Gastrocnemius medialis (tissue), 4 donors: ENCODE measurements at regions of chr19 and their contacts with region 1.

Region 1: DNA sequence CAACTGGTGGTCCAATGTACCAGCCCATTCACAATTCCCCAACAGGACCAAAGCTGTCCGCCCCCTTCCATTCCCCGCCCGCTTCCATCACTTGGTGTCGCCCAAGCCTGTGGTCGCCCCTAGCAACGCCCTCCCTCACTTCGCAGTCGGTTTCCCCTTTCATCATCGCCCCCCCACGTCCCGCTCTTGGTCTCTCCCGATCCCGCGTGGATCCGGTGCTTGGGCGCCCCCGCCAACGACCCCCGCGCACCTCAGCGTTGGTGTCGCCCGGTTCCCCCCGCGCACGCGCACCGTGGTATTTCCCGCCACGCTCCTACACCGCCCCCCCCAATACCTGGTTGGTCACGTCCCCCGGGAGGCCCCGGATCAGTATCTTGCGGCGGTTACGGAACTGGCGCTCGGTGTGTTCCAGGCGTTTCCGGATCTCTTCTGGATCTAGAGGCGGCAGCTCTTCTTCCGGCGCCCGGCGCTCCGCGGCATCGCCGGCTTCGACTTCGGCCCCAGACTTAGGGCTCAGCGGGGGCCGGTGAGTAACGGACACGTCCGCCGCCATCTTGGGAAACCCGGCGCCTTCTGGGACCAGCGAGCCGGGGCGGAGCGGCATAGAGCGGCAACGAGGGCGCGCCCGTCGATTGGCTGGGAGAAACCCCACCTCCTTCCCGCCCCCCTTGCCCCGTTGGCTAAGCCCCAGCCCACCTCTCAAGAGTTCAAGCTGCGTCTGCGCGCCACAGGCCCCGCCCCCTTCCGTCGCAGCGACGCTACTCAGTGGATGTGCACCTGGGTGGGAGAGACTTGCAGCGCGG is at the start of gene RAVER1:
- DNase-seq: peak; percentile 97
- ATAC-seq: peak; percentile 90 to 91
- H3K4me3 ChIP-seq: peak within 1 kb of the TSS; percentile 69 to 96 (median 88)
- H3K27ac ChIP-seq: peak within 1 kb of the TSS; percentile 90 to 98 (median 95)
- H3K4me1 ChIP-seq: peaks cover 18 to 23% of the 10 kb centered on the region in 2 donors
- H3K27me3 ChIP-seq: no peaks in the 10 kb centered on the region
- CTCF ChIP-seq: no peak
- POLR2A ChIP-seq: peak; percentile 85 to 94
- total RNA-seq, gene RAVER1: 10.0 to 15.9 (median 11.8) TPM

Region 2: GRCh38 chr19:9834726-9835506 is 498.2 kb before region 1 on chr19 and contains the start of gene PIN1:
- in situ Hi-C with region 1: no loop called
- intact Hi-C with region 1: loop called (anchors 10 kb)
- DNase-seq: peak; percentile 98 to 99
- ATAC-seq: peak; percentile 98 to 99
- H3K4me3 ChIP-seq: peak within 1 kb of the TSS; percentile 74 to 99 (median 94)
- H3K27ac ChIP-seq: peak within 1 kb of the TSS; percentile 78 to 90 (median 87)
- H3K4me1 ChIP-seq: peaks cover 12 to 18% of the 10 kb centered on the region in 2 donors
- H3K27me3 ChIP-seq: no peaks in the 10 kb centered on the region
- CTCF ChIP-seq: peak; percentile 36 to 74 (median 43)
- POLR2A ChIP-seq: peak; percentile 24 to 52
- total RNA-seq, gene PIN1: 83.9 to 111 (median 93.4) TPM

Region 3: DNA sequence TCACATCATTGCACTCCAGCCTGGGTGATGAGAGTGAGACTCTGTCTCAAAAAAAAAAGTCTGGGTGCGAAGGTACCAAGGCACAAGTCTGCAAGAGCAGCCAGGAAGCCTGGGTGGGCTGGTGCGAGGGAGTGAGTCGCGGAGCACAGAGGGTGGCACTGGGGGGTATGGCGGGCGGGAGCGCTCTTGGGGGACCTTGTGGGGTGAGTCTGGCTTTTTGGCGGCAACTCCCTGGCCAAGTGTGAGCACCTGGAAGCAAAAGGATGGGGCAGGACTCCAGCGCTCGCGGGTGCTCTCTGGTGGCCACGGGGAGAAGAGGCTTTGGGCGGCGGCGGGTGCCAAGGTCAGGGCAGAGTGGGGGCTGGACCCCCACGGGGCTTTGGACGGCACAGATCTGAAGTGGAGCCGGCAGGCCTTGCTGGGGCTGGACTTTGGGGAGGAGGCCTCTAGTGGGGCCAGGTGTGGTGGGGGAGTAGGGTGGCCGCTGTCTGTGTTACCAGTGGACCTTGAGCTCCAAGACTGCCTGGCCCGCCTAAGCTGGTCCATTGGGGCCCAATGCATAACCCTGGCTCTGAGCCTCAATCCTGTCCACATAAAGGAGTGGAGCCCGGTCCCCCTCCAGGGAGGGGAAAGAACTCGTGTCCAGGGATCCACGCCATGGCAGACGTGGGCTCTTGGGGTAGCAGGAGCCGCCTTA is 220.1 kb before region 1 on chr19:
- in situ Hi-C with region 1: no loop called
- intact Hi-C with region 1: loop called (anchors 10 kb)
- DNase-seq: no peak
- ATAC-seq: no peak
- H3K4me3 ChIP-seq: no peak overlapping the region
- H3K27ac ChIP-seq: peak overlapping the region in 1 of 4 donors; percentile 27
- H3K4me1 ChIP-seq: peaks cover 4 to 17% of the 10 kb centered on the region in 2 donors
- H3K27me3 ChIP-seq: no peaks in the 10 kb centered on the region
- CTCF ChIP-seq: peak in 4 of 5 experiments; percentile 27 to 54 (median 38)
- POLR2A ChIP-seq: no peak

Region 4: GRCh38 chr19:10251792-10252694 is 81.1 kb before region 1 on chr19 and contains the start of gene MRPL4:
- in situ Hi-C with region 1: no loop called
- intact Hi-C with region 1: loop called (anchors 1 kb)
- DNase-seq: peak; percentile 95 to 97
- ATAC-seq: peak; percentile 99 to 100
- H3K4me3 ChIP-seq: peak within 1 kb of the TSS; percentile 77 to 97 (median 89)
- H3K27ac ChIP-seq: peak within 1 kb of the TSS; percentile 82 to 87 (median 86)
- H3K4me1 ChIP-seq: peaks cover 7 to 15% of the 10 kb centered on the region in 2 donors
- H3K27me3 ChIP-seq: no peaks in the 10 kb centered on the region
- CTCF ChIP-seq: peak in 2 of 5 experiments; percentile 44 to 57
- POLR2A ChIP-seq: peak; percentile 63 to 73
- total RNA-seq, gene MRPL4: 68.3 to 112 (median 84.4) TPM

Region 5: DNA sequence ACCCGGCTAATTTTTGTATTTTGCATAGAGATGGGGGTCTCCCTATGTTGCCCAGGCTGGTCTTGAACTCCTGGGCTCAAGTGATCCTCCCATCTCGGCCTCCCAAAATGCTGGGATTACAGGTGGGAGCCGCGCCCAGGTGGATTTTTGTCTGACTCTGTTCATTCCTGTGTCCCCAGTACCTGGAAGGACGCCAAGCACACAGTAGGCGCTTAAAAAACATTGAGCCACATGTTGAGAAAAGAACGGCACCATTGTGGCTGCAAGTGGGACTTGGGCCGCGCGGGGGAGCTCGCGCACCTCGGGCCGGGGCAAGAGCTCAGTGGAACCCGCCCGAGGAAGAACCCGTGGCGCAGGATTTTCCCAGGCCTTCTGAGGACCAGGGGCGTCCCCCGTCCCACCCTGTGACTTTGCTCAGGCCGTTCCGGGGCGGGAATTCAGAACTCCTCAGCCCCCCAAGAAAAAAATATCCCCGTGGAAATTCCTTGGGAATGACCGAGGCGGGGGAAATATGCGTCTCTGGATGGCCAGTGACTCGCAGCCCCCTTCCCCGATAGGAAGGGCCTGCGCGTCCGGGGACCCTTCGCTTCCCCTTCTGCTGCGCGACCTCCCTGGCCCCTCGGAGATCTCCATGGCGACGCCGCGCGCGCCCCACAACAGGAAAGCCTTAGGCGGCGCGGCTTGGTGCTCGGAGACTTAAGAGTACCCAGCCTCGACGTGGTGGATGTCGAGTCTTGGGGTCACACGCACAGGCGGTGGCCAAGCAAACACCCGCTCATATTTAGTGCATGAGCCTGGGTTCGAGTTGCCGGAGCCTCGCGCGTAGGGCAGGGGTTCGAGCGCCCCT is 63.6 kb before region 1 on chr19:
- in situ Hi-C with region 1: no loop called
- intact Hi-C with region 1: loop called (anchors 5 kb)
- DNase-seq: peak; percentile 47 to 70
- ATAC-seq: peak; percentile 72 to 75
- H3K4me3 ChIP-seq: peak overlapping the region; percentile 49 to 60 (median 56)
- H3K27ac ChIP-seq: peak overlapping the region; percentile 75 to 84 (median 78)
- H3K4me1 ChIP-seq: peaks cover 5 to 21% of the 10 kb centered on the region in 2 donors
- H3K27me3 ChIP-seq: peaks cover 7 to 24% (median 18%) of the 10 kb centered on the region in 3 donors
- CTCF ChIP-seq: peak; percentile 81 to 94 (median 92)
- POLR2A ChIP-seq: no peak

Region 6: DNA sequence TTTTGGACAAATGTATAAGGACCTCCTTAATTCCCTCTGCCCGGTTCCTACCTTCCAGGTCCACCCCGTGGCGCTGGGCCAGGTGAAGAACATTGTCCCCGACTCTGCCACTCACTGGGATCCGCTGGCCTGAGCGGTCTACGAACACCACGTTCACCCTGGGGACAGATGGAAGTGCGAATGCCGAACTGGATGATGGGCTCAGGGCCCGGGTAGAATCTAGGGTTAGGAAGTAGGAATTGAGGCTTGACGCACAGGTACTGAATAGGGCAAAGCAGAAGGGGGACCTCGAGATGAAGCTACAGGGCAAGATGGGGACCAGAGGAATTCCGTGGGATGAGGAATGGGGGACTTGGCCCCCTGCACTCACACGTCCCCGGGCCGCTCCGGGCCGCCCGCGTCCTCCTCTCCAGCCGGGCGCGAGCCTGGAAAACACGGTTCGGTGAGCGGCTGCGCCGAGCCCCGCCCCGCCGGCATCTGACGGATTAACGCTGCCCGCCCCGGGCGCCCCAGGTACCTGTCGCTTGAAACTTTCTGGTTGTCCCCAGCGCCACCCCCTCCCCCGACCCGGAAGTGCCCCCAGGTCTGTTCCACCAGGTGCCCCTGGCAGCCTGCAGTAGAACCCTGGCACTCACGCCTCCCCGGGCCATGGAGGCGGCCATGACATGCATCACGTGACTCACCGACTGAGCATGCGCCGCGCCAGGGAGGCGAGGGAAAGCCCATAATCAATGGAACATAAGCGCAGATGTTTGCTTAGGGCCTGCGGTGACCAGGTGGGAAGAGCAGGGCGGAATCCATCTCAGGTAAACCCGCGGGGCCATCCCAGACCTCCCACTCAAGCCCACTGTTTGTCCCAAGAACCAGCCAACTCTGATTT is 17.6 kb before region 1 on chr19 and contains the start of gene FDX2:
- in situ Hi-C with region 1: no loop called
- intact Hi-C with region 1: loop called (anchors 1 kb)
- DNase-seq: peak; percentile 63 to 73
- ATAC-seq: peak; percentile 90 to 92
- H3K4me3 ChIP-seq: peak within 1 kb of the TSS; percentile 92 to 98 (median 94)
- H3K27ac ChIP-seq: peak within 1 kb of the TSS; percentile 80 to 89 (median 86)
- H3K4me1 ChIP-seq: peaks cover 8 to 12% of the 10 kb centered on the region in 2 donors
- H3K27me3 ChIP-seq: no peaks in the 10 kb centered on the region
- CTCF ChIP-seq: peak in 1 of 5 experiments; percentile 17
- POLR2A ChIP-seq: no peak
- total RNA-seq, gene FDX2: 9.1 to 32.0 (median 21.9) TPM

Region 7: GRCh38 chr19:10380313-10381102 is 47.4 kb after region 1 on chr19 and contains the start of gene TYK2:
- in situ Hi-C with region 1: no loop called
- intact Hi-C with region 1: loop called (anchors 1 kb)
- DNase-seq: peak; percentile 96 to 98
- ATAC-seq: peak; percentile 99 to 100
- H3K4me3 ChIP-seq: peak within 1 kb of the TSS; percentile 90 to 98 (median 95)
- H3K27ac ChIP-seq: peak within 1 kb of the TSS; percentile 82 to 92 (median 82)
- H3K4me1 ChIP-seq: peaks cover 10 to 14% of the 10 kb centered on the region in 2 donors
- H3K27me3 ChIP-seq: no peaks in the 10 kb centered on the region
- CTCF ChIP-seq: no peak
- POLR2A ChIP-seq: peak; percentile 40 to 53
- total RNA-seq, gene TYK2: 32.6 to 58.5 (median 50.9) TPM

Region 8: DNA sequence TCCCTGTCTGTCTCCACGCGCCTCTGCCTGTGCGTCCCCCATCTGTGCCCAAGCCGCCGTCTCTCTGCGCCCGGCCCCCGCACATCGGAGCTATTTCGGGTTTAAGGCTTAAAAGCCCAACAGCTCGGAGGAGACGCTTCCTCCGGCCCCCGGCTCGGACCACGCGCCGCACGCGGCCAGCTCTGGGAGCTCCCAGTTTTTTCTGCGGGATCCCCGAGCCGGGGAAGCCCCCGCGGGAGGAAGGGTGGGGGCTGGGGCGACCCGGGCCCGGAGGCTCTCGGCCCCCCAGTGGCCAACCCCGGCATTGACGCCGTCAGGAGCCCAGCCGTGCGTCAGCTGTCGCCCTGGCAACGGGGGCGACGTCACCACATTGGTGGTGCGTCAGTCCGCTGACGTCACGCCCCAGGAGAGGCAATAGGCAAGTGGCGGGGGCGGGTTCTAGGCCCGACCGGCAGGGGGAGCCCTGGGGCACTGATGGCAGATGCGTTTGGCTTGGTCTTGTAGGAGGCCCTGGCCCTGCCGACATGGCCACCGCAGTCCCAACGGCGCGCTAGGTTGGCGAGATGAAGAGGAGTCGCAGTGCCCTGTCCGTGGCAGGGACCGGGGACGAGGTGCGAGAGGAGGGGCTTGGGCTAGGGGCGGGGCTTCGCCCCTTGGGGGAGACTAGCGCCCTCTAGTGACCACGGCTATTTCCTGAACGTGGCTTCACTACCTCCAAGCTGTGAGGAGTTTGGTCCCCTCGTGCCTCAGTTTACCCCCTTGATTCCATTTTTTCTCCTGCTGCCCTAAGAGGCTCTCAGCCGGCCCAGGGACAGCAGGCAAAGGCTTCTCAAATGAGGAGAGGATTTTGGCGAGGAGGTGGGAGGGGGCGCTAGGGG is 83.5 kb after region 1 on chr19:
- in situ Hi-C with region 1: no loop called
- intact Hi-C with region 1: no loop called
- DNase-seq: peak; percentile 53 to 87
- ATAC-seq: peak; percentile 78 to 86
- H3K4me3 ChIP-seq: peak overlapping the region; percentile 59 to 75 (median 69)
- H3K27ac ChIP-seq: peak overlapping the region; percentile 56 to 84 (median 62)
- H3K4me1 ChIP-seq: peaks cover 27 to 42% of the 10 kb centered on the region in 2 donors
- H3K27me3 ChIP-seq: peaks cover 44 to 49% (median 48%) of the 10 kb centered on the region in 3 donors
- CTCF ChIP-seq: peak; percentile 80 to 97 (median 89)
- POLR2A ChIP-seq: no peak

Region 9: DNA sequence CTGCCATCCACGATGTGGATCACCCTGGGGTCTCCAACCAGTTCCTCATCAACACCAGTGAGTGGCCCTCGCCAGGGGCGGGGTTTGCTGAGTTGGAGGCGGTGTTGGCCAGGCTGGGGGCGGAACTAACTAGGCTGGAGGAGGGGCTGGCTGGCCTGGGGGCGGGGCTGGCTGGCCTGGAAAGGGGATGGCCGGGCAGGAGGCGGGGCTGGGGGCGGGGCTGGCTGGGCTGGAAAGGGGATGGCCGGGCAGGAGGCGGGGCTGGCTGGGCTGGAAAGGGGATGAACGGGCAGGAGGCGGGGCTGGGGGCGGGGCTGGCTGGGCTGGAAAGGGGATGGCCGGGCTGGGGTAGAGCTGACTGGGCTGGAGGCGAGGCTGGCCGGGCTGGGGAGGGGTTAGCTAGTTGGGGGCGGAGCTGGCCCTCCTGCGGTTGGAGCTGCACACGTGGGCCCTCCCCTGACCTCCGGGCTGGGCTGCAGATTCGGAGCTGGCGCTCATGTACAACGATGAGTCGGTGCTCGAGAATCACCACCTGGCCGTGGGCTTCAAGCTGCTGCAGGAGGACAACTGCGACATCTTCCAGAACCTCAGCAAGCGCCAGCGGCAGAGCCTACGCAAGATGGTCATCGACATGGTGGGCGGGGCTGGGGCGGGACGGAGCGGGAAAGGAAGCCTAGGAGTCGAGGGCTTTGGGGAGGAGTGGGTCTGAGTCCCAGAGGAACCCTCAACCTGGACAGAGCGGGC is 128.1 kb after region 1 on chr19:
- in situ Hi-C with region 1: no loop called
- intact Hi-C with region 1: no loop called
- DNase-seq: peak; percentile 94
- ATAC-seq: peak; percentile 85 to 86
- H3K4me3 ChIP-seq: peak overlapping the region; percentile 27 to 42 (median 40)
- H3K27ac ChIP-seq: peak overlapping the region; percentile 54 to 79 (median 78)
- H3K4me1 ChIP-seq: peaks cover 4 to 6% of the 10 kb centered on the region in 2 donors
- H3K27me3 ChIP-seq: no peaks in the 10 kb centered on the region
- CTCF ChIP-seq: no peak
- POLR2A ChIP-seq: no peak